ENCODE measurements at regions of chr22 and their contacts with region 1.

Region 1: GRCh38 chr22:32708830-32709229 is 92.7 kb upstream of the TIMP3 start:
- DNase-seq: no peak
- ATAC-seq: peak; percentile 89

Region 2: GRCh38 chr22:32796865-32797573 is 88.2 kb after region 1 on chr22:
- intact Hi-C with region 1: loop called (anchors 5 kb)
- DNase-seq: peak; percentile 87
- ATAC-seq: peak; percentile 59

Region 3: DNA sequence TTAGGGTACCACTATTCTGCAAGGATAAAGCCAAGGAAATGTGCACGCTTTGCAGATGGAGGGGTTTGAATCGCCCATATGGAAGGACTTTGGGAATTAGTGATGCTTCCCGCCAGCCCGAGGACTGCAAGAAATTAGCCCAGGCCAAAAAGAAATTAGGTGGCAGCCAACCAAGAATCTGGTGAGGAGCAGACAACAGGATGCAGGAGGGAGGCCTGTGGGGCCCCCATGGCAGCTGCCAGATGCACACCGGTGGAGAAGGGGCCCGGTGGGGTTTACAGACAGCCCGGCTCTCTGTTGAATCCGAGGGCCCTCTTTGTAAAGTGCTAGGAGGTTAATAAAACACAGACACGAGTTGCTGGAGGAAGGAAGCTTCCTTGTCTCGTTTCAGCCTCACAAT is 166.1 kb after region 1 on chr22:
- intact Hi-C with region 1: no loop called
- DNase-seq: no peak
- ATAC-seq: no peak

Measured in Right ventricle myocardium inferior (tissue), 1 donor.